HepG2 (cell line): ENCODE measurements at regions of chr16 and their contacts with region 1.

Region 1: DNA sequence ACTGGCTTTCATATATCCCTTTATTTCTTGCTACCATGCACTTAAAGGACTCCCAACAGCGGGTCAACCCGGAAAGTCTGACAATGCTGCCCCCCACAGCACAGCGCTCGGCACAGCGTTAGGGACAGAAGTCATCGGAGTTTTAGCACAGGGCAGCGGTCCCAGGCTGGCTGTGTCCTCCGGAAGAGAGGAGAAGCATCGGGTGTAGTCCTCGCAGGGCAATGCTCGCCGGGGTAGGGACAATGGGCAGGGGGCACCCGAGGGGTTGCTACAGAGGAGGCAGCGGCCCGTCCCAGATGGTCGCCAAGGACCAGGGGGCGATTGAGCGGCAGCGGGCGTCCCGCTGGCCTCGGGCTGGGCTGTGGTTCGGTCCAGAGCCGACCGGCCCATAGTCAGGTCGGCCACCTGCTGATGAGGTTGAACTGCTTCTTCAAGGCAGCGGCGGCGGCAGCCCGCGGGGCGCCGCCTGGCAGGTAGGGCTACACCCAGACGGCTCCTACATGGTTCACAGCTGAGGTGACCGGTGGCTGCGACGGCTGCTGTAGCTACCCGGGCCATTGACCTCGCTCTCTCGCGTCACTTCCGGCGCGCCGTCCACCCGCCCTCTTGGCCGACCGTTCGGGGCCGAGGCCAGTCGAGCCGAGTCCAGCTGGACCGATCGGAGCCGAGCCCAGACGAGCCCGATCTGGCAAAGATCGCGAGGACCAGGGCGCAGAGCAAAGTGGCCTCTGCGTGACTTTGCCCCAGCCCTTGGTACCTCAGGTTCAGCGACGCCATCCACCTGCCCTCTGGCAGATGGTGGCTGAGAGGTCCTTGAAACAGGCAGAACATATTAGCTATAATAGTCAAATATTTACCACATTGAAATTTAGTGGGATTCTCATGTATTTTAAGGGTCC is 4.7 kb upstream of the LCMT1 start:
- DNase-seq: peak; percentile 90
- ATAC-seq: peak; percentile 86
- H3K4me3 ChIP-seq: peak overlapping the region; percentile 69 to 95 (median 84)
- H3K27ac ChIP-seq: peak overlapping the region; percentile 50
- H3K4me1 ChIP-seq: peaks cover 39% of the 10 kb centered on the region
- H3K27me3 ChIP-seq: no peaks in the 10 kb centered on the region; a peak in 1 of 5 replicates
- CTCF ChIP-seq: peak; percentile 93
- EP300 ChIP-seq: peak in 1 of 2 experiments; percentile 30; a peak in 1 of 4 replicates
- POLR2A ChIP-seq: peak; percentile 90 to 96
- RAD21 ChIP-seq: peak; percentile 62

Region 2: GRCh38 chr16:24834459-24835335 is 272.1 kb before region 1 on chr16:
- CTCF ChIA-PET with region 1: no interaction called
- POLR2A ChIA-PET with region 1: no interaction called
- in situ Hi-C with region 1: no loop called
- intact Hi-C with region 1: loop called (anchors 10 kb)
- DNase-seq: peak; percentile 62
- ATAC-seq: peak; percentile 81
- H3K4me3 ChIP-seq: no peak overlapping the region
- H3K27ac ChIP-seq: no peak overlapping the region
- H3K4me1 ChIP-seq: peaks cover 29% of the 10 kb centered on the region
- H3K27me3 ChIP-seq: no peaks in the 10 kb centered on the region
- CTCF ChIP-seq: peak; percentile 91
- EP300 ChIP-seq: no peak
- POLR2A ChIP-seq: no peak
- RAD21 ChIP-seq: peak; percentile 82

Region 3: DNA sequence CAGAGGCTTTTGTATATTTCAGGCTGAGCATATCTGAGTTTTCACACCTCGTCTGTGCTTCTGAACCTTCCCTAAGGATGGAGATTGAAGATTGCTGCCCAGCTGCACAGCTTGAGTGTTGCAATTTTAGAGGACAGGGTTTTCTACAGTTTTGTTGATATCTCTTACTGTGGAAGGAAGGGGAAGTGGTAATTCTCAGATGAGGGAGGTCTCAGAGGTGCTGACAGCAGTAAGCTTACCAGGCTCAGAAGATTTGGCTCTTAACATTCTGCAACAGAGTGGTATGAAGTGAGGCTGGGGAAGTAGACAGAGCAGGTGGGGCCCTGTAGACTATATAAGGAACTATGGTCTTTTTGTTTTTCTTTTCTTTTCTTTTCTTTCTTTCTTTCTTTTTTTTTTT is 45.9 kb before region 1 on chr16:
- CTCF ChIA-PET with region 1: no interaction called
- POLR2A ChIA-PET with region 1: interaction called, 3 read pairs
- in situ Hi-C with region 1: loop called (anchors 5 kb)
- intact Hi-C with region 1: loop called (anchors 5 kb)
- DNase-seq: no peak
- ATAC-seq: no peak
- H3K4me3 ChIP-seq: no peak overlapping the region
- H3K27ac ChIP-seq: no peak overlapping the region
- H3K4me1 ChIP-seq: peaks cover 28% of the 10 kb centered on the region
- H3K27me3 ChIP-seq: peaks cover 0 to 12% of the 10 kb centered on the region in 2 experiments; a peak in 2 of 5 replicates
- CTCF ChIP-seq: no peak
- EP300 ChIP-seq: no peak
- POLR2A ChIP-seq: no peak
- RAD21 ChIP-seq: no peak

Region 4: DNA sequence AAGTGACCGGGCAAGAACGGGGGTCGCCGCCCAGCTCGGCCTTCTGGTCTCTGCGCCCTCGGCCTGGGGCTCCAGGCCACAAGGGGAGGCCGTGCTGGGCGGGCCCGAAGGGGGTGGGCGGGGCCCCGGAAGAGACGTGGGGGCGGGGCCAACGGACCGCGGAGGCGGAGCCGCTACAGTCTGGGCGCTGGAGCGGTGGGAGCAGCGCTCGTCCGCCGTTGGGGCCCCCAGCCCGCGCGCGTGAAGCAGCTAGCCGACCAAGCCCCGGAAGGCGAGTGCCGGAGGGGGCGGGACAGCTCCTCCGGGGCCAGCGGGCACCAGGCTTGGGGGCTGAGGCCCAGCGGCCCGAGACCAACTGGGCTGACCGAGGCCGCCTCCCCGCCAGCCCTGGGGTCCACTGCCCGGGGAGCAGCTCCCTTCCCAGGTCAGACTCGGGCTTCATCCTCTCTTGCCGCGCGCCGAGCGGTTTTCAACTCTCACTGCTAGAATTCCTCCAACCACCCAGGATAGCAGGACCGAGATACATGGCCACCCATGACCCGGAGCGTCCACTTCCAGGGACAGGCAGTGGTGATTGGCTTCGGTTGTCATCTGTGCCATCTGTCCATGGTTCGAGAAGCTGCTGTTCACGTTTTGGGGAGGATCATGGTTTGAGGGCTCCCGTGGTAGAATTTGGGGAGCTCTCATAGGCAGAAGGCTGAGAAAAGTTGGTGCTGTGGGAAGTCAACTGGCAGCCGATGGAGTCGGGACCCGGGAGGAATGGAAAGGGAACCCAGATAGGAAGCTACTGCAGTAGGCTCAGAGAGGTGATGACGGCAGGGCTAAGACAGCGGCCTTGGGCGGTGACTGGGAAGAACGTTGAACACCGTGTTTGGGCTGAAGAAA is 39.8 kb before region 1 on chr16:
- CTCF ChIA-PET with region 1: no interaction called
- POLR2A ChIA-PET with region 1: interaction called, 15 read pairs
- in situ Hi-C with region 1: loop called (anchors 5 kb)
- intact Hi-C with region 1: loop called (anchors 5 kb)
- DNase-seq: peak; percentile 44
- ATAC-seq: peak; percentile 91
- H3K4me3 ChIP-seq: peak overlapping the region; percentile 57 to 82 (median 66)
- H3K27ac ChIP-seq: no peak overlapping the region
- H3K4me1 ChIP-seq: peaks cover 44% of the 10 kb centered on the region
- H3K27me3 ChIP-seq: peaks cover 0 to 40% of the 10 kb centered on the region in 2 experiments; a peak in 3 of 5 replicates
- CTCF ChIP-seq: 0 out of 2 replicates have a peak, but pooled peaks have one; percentile 4
- EP300 ChIP-seq: no peak
- POLR2A ChIP-seq: peak in 1 of 2 experiments; percentile 87; a peak in 3 of 4 replicates
- RAD21 ChIP-seq: no peak